ENCODE measurements at regions of chr10 and their contacts with region 1.

Region 1: GRCh38 chr10:14604181-14605142 is 170.2 kb downstream of the FAM107B start:
- DNase-seq: peak; percentile 39 to 86 (median 73)
- ATAC-seq: peak; percentile 71
- H3K4me3 ChIP-seq: peak overlapping the region; percentile 55 to 66
- H3K4me3 Mint-ChIP-seq: peak overlapping the region; percentile 93
- H3K27ac ChIP-seq: peak overlapping the region; percentile 48
- H3K27ac Mint-ChIP-seq: peak overlapping the region; percentile 94
- H3K4me1 ChIP-seq: peaks cover 44% of the 10 kb centered on the region
- H3K4me1 Mint-ChIP-seq: peaks cover 50% of the 10 kb centered on the region
- H3K27me3 ChIP-seq: no peaks in the 10 kb centered on the region
- H3K27me3 Mint-ChIP-seq: no peaks in the 10 kb centered on the region
- CTCF ChIP-seq: peak; percentile 16

Region 2: DNA sequence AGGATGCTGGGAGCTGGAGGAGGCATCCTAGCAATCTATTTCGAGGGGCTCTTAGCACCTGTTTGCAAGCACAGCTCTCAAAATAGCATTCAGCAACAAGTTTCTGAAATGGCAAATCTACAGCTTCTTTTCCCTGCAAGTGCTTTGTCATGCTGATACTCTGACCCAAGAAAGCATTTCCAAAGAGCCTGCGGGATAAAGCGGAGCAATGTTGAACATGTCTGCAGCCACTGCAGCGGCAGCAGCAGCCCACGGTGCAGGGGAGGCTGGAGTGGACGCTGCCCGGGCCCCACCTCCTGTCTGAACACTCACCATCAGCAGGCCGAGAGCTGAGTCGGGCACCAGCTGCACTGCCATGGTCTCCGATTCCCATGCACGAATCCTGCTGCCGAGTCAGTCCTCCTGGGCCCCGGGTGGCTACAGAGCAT is 274.7 kb before region 1 on chr10:
- CTCF ChIA-PET with region 1: no interaction called
- POLR2A ChIA-PET with region 1: no interaction called
- intact Hi-C with region 1: no loop called
- DNase-seq: no peak
- ATAC-seq: no peak
- H3K4me3 ChIP-seq: no peak overlapping the region
- H3K4me3 Mint-ChIP-seq: no peak overlapping the region
- H3K27ac ChIP-seq: no peak overlapping the region
- H3K27ac Mint-ChIP-seq: no peak overlapping the region
- H3K4me1 ChIP-seq: no peaks in the 10 kb centered on the region
- H3K4me1 Mint-ChIP-seq: no peaks in the 10 kb centered on the region
- H3K27me3 ChIP-seq: no peaks in the 10 kb centered on the region
- H3K27me3 Mint-ChIP-seq: peaks cover 56% of the 10 kb centered on the region
- CTCF ChIP-seq: no peak

Region 3: DNA sequence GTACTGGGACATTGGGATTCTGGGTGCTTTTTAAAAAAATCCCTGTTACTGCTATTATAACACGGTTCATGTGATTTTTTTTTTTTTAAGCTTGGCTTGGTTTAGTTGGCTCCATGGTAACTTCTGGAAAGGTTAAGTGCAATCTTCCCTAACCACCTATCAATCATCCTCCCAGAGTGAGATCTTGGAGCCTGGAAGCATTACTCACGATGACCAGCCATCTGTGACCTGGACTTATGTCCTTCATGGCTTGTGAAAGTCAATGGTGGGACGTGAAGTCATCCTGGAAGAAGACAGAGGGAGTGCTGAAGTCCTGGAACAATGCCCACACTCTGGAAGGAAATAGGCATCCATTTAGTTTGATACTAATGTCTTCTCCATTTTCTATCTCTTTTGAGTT is 138.2 kb before region 1 on chr10:
- CTCF ChIA-PET with region 1: no interaction called
- POLR2A ChIA-PET with region 1: no interaction called
- intact Hi-C with region 1: no loop called
- DNase-seq: no peak
- ATAC-seq: no peak
- H3K4me3 ChIP-seq: no peak overlapping the region
- H3K4me3 Mint-ChIP-seq: no peak overlapping the region
- H3K27ac ChIP-seq: no peak overlapping the region
- H3K27ac Mint-ChIP-seq: no peak overlapping the region
- H3K4me1 ChIP-seq: no peaks in the 10 kb centered on the region
- H3K4me1 Mint-ChIP-seq: no peaks in the 10 kb centered on the region
- H3K27me3 ChIP-seq: peaks cover 0 to 2% of the 10 kb centered on the region in 2 experiments
- H3K27me3 Mint-ChIP-seq: peaks cover 20% of the 10 kb centered on the region
- CTCF ChIP-seq: no peak

Region 4: DNA sequence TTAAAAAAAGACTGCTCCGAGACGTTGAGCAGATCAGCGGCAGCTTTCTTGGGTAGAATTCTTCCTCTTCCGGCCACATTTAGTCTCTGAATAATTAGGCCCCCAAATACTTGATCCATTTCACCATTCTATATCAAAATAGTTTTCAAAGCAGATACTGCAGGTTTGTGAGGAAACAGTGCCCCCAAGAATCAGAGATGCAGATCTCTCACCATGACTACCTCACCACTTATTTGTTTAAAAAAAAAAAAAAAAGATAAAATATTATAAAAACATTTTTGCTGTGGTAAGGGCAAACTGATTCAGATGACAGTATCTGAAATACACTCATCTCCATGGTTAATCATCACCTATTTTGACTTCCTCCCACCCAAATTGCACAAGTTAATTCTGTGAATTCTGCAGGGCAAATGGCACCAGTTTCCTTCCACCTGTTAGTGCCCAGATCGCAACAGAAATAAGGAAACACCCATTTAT is 40.2 kb before region 1 on chr10:
- CTCF ChIA-PET with region 1: interaction called, 8 read pairs
- POLR2A ChIA-PET with region 1: interaction called, 4 read pairs
- intact Hi-C with region 1: loop called (anchors 2 to 5 kb)
- DNase-seq: peak in 3 of 9 experiments; percentile 45 to 85 (median 75)
- ATAC-seq: peak; percentile 57
- H3K4me3 ChIP-seq: peak overlapping the region in 1 of 2 experiments; percentile 21
- H3K4me3 Mint-ChIP-seq: peak overlapping the region; percentile 80
- H3K27ac ChIP-seq: peak overlapping the region; percentile 77 to 79
- H3K27ac Mint-ChIP-seq: peak overlapping the region; percentile 98
- H3K4me1 ChIP-seq: peaks cover 90% of the 10 kb centered on the region
- H3K4me1 Mint-ChIP-seq: peaks cover 88% of the 10 kb centered on the region
- H3K27me3 ChIP-seq: no peaks in the 10 kb centered on the region
- H3K27me3 Mint-ChIP-seq: no peaks in the 10 kb centered on the region
- CTCF ChIP-seq: no peak

Region 5: DNA sequence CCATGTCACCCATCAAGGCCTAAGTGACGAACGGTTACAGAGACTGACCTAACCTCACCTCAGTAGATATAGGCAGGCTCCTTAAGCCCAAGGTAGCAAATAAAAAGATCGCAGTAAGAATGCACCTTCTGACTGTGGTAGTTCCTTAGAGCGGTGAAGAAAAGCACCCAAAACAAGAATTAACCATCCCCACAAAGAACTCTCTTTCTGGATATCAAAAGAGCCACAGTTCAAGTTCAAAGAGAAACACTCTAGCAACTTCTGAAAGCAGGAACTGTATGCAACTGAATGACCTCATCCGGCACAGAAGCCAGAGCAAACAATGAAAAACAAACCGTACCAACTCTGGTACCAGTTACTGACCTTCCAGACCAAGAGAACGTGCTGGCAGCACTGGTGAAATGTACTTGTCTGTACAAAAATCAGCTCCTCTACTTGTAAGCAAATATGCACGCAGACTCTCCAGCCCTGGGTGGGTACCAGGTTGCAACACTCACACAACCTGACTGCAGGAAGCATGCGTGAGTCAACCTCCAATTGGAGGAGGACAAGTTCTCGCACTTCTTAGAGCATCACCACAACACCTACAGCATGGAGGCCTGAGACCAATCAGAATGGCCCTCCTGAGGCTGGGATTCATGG is 32.5 kb before region 1 on chr10:
- CTCF ChIA-PET with region 1: interaction called, 3 read pairs
- POLR2A ChIA-PET with region 1: interaction called, 6 read pairs
- intact Hi-C with region 1: loop called (anchors 1 to 2 kb)
- DNase-seq: peak; percentile 46 to 91 (median 68)
- ATAC-seq: peak; percentile 66
- H3K4me3 ChIP-seq: peak overlapping the region; percentile 58 to 65
- H3K4me3 Mint-ChIP-seq: peak overlapping the region; percentile 88
- H3K27ac ChIP-seq: peak overlapping the region; percentile 82 to 89
- H3K27ac Mint-ChIP-seq: peak overlapping the region; percentile 97
- H3K4me1 ChIP-seq: peaks cover 66% of the 10 kb centered on the region
- H3K4me1 Mint-ChIP-seq: peaks cover 89% of the 10 kb centered on the region
- H3K27me3 ChIP-seq: no peaks in the 10 kb centered on the region
- H3K27me3 Mint-ChIP-seq: no peaks in the 10 kb centered on the region
- CTCF ChIP-seq: no peak